Activated CD4-positive, alpha-beta memory T cell treated with anti-CD3 and anti-CD28 coated beads, Interleukin-2, amount 10 ng/mL, durations not matched to agents 7 days and 5 days (primary cell): ENCODE measurements at regions of chr17 and their contacts with region 1.

Region 1: GRCh38 chr17:57284984-57285646 is 28.8 kb downstream of the MSI2 start:
- DNase-seq: peak; percentile 73
- H3K4me3 Mint-ChIP-seq: peak overlapping the region; percentile 64
- H3K27ac Mint-ChIP-seq: peak overlapping the region; percentile 88
- H3K4me1 Mint-ChIP-seq: peaks cover 79% of the 10 kb centered on the region
- H3K27me3 Mint-ChIP-seq: no peaks in the 10 kb centered on the region

Region 2: GRCh38 chr17:57255776-57256681 is 29.1 kb before region 1 on chr17 and contains the start of gene MSI2:
- CTCF ChIA-PET with region 1: no interaction called
- POLR2A ChIA-PET with region 1: interaction called, 21 read pairs
- DNase-seq: peak; percentile 91
- H3K4me3 Mint-ChIP-seq: peak within 1 kb of the TSS; percentile 86
- H3K27ac Mint-ChIP-seq: peak within 1 kb of the TSS; percentile 87
- H3K4me1 Mint-ChIP-seq: peaks cover 49% of the 10 kb centered on the region
- H3K27me3 Mint-ChIP-seq: peaks cover 6% of the 10 kb centered on the region
- total RNA-seq, gene MSI2: 107 to 111 TPM

Region 3: DNA sequence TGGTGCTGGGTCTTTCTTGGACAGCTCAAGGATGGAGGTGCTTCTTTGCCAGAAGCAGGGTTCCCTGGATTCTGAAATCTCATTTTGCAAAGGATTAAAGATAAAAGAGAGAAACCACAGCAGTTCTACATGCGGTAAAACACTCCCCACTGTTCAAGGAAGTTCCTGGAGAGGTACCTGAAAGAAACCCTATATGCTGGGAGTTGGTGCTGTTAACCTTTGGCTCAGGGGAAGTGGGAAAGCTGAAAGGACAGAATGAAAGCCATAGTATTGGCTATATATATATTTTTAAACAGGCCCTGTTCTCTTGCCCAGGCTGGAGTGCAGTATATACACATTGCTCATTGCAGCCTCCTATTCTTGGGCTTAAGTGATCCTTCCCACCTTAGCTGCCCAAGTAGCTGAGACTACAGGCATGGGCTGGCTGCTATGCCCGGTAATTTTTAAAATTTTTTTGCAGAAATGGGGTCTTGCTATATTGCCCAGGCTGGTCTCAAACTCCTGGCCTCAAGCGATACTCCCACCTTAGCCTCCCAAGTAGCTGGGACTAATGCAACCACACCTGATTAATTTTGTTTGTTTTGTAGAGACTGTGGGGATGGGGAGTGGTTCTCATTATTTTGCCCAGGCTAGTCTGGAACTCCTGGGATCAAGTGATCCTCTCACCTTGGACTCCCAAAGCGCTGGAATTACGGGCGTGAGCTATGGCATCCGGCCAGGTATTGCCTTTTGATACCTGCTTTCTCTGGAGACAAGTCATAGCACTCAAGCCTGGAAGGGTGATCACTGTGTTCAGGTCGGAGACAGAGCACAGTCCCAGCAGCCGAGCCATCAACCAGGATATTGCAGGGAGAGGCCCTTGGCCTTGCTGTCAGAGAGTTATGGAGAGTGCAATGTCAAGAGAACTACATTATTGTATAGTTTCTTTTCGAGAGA is 26.4 kb after region 1 on chr17:
- CTCF ChIA-PET with region 1: no interaction called
- POLR2A ChIA-PET with region 1: no interaction called
- DNase-seq: no peak
- H3K4me3 Mint-ChIP-seq: no peak overlapping the region
- H3K27ac Mint-ChIP-seq: no peak overlapping the region
- H3K4me1 Mint-ChIP-seq: no peaks in the 10 kb centered on the region
- H3K27me3 Mint-ChIP-seq: no peaks in the 10 kb centered on the region